ENCODE measurements at regions of chr16 and their contacts with region 1.

Region 1: GRCh38 chr16:77782694-77783093 is 5.7 kb upstream of the VAT1L start:
- DNase-seq: no peak
- H3K4me3 Mint-ChIP-seq: no peak overlapping the region
- H3K27ac Mint-ChIP-seq: no peak overlapping the region
- H3K4me1 Mint-ChIP-seq: no peaks in the 10 kb centered on the region
- H3K27me3 Mint-ChIP-seq: peaks cover 13% of the 10 kb centered on the region

Region 2: GRCh38 chr16:77335652-77336234 is 447.0 kb before region 1 on chr16:
- intact Hi-C with region 1: no loop called
- DNase-seq: no peak
- H3K4me3 Mint-ChIP-seq: no peak overlapping the region
- H3K27ac Mint-ChIP-seq: no peak overlapping the region
- H3K4me1 Mint-ChIP-seq: peaks cover 2% of the 10 kb centered on the region
- H3K27me3 Mint-ChIP-seq: no peaks in the 10 kb centered on the region

Region 3: GRCh38 chr16:77675464-77676324 is 107.0 kb before region 1 on chr16:
- intact Hi-C with region 1: loop called (anchors 1 kb)
- DNase-seq: peak; percentile 36
- H3K4me3 Mint-ChIP-seq: no peak overlapping the region
- H3K27ac Mint-ChIP-seq: no peak overlapping the region
- H3K4me1 Mint-ChIP-seq: no peaks in the 10 kb centered on the region
- H3K27me3 Mint-ChIP-seq: peaks cover 7% of the 10 kb centered on the region

Region 4: GRCh38 chr16:77722309-77723107 is 60.2 kb before region 1 on chr16 and contains the start of gene NUDT7:
- intact Hi-C with region 1: loop called (anchors 2 kb)
- DNase-seq: peak; percentile 91
- H3K4me3 Mint-ChIP-seq: peak within 1 kb of the TSS; percentile 84
- H3K27ac Mint-ChIP-seq: peak within 1 kb of the TSS; percentile 77
- H3K4me1 Mint-ChIP-seq: peaks cover 13% of the 10 kb centered on the region
- H3K27me3 Mint-ChIP-seq: no peaks in the 10 kb centered on the region
- total RNA-seq, gene NUDT7: 4.3 and 5.6 TPM in 2 replicates

Region 5: GRCh38 chr16:77767211-77767610 is 15.5 kb before region 1 on chr16:
- intact Hi-C with region 1: no loop called
- DNase-seq: no peak
- H3K4me3 Mint-ChIP-seq: no peak overlapping the region
- H3K27ac Mint-ChIP-seq: no peak overlapping the region
- H3K4me1 Mint-ChIP-seq: no peaks in the 10 kb centered on the region
- H3K27me3 Mint-ChIP-seq: no peaks in the 10 kb centered on the region

Measured in activated T-helper 1 cell treated with anti-CD3 and anti-CD28 coated beads, Interleukin-12 subunit alpha, Interleukin-12 subunit beta, Interleukin-2, Interleukin-4 antibody, amounts not matched to agents 30 ng/mL and 10 ng/mL and 1 ng/mL, durations not matched to agents 14 hours and 24 hours and 36 hours (primary cell).